Tibial artery (tissue), 4 donors: ENCODE measurements at regions of chr12 and their contacts with region 1.

Region 1: GRCh38 chr12:2845280-2845679 is 10.4 kb upstream of the NRIP2 start:
- DNase-seq: peak in 1 of 2 donors; percentile 89
- H3K4me3 ChIP-seq: no peak overlapping the region
- H3K27ac ChIP-seq: peak overlapping the region; percentile 69 to 78
- H3K4me1 ChIP-seq: peaks cover 0 to 67% (median 26%) of the 10 kb centered on the region in 4 donors
- H3K27me3 ChIP-seq: no peaks in the 10 kb centered on the region
- CTCF ChIP-seq: no peak

Region 2: DNA sequence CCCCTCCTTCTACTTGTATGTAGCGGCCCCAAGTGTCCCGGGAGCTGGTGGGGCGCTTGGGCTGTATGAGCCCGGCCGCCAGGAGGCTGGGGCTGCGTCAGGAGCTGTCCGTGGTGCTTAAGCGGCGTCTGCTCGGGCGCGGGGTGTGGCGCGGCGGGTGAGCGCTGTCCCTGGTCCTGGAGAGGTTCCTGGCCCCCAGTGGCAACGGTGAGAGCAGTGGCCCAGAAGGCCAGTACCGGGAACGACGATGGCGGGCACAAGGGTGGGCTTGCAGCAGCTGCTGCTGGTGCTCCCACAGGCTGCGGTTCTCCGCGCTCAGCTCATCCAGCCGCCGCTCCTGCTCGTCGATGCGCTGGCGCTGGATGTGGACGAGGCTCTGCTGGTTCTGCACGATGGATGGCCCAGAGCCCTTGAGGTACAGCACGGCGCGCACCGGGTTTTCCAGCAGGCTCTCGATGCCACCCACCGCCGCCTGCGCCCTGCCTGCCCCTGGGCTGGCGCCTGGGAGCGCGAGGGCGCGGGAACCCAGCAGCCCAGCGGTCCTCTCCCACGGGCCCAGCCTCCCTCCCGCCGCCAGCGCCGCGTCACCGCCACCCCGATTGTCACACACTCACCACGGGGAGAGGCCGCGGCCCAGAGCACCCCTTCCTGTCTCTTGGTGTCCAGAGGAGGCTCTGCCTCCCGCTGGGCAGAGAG is 92.5 kb before region 1 on chr12:
- intact Hi-C with region 1: no loop called
- DNase-seq: peak; percentile 48 to 81
- H3K4me3 ChIP-seq: no peak overlapping the region
- H3K27ac ChIP-seq: no peak overlapping the region
- H3K4me1 ChIP-seq: peaks cover 0 to 7% (median 0%) of the 10 kb centered on the region in 4 donors
- H3K27me3 ChIP-seq: peaks cover 0 to 11% of the 10 kb centered on the region in 2 donors
- CTCF ChIP-seq: no peak

Region 3: DNA sequence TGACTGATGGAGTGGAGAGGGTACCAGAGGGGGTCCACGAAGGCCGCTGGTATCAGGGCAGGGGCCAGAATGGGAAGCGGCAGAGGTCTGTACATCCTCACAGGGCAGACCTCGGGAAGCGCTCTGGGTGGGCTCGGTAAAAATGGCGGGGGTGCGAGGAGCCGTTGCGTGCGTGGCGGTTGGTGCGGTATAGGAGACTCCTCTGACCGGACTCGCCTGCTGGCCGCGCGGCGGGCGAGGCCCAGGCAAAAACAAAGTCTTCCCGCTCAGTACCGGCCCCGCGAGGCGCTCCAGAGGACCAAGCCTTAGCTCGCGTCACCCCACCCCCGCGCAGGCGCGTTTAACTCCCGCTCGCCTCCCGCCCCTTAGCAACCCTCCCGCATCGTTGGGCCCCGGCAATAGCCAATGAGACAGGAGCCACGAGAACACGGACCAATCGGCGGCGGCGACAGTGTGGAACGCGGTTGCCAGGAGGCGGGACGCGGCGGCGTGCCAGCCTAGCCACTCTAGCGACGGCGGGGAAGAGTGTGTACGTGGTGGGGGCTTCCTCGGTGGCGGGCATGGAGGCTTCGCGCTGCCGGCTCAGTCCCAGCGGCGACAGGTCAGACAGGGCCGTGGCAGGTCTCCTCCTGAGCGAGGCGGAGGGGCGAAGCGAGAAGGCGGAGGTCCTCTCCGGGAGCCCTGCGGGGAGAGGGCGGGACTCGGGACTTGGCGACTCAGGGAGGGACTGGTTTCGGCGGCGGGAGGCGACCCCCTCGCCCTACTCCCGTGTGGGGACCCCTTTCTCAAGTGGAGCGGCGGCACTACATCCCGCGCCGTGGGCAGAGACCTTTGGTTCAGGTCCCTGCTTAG is 45.3 kb after region 1 on chr12 and contains the start of gene TULP3:
- intact Hi-C with region 1: loop called (anchors 5 kb)
- DNase-seq: peak; percentile 99
- H3K4me3 ChIP-seq: peak within 1 kb of the TSS; percentile 91 to 93
- H3K27ac ChIP-seq: peak within 1 kb of the TSS; percentile 98 to 99
- H3K4me1 ChIP-seq: peaks cover 0 to 45% (median 23%) of the 10 kb centered on the region in 4 donors
- H3K27me3 ChIP-seq: no peaks in the 10 kb centered on the region
- CTCF ChIP-seq: peak in 1 of 2 experiments; percentile 13